ENCODE measurements at regions of chr9 and their contacts with region 1.

Region 1: GRCh38 chr9:79280691-79281090 is 291.1 kb upstream of the TLE4 start:
- DNase-seq: no peak
- ATAC-seq: no peak
- H3K4me3 Mint-ChIP-seq: no peak overlapping the region
- H3K27ac Mint-ChIP-seq: no peak overlapping the region
- H3K4me1 Mint-ChIP-seq: no peaks in the 10 kb centered on the region
- H3K27me3 Mint-ChIP-seq: peaks cover 8% of the 10 kb centered on the region
- CTCF ChIP-seq: no peak

Region 2: GRCh38 chr9:79264511-79265355 is 16.0 kb before region 1 on chr9:
- CTCF ChIA-PET with region 1: no interaction called
- POLR2A ChIA-PET with region 1: no interaction called
- intact Hi-C with region 1: no loop called
- DNase-seq: no peak
- ATAC-seq: no peak
- H3K4me3 Mint-ChIP-seq: no peak overlapping the region
- H3K27ac Mint-ChIP-seq: no peak overlapping the region
- H3K4me1 Mint-ChIP-seq: no peaks in the 10 kb centered on the region
- H3K27me3 Mint-ChIP-seq: peaks cover 30% of the 10 kb centered on the region
- CTCF ChIP-seq: no peak

Region 3: GRCh38 chr9:81132318-81132717 is 1851.6 kb after region 1 on chr9:
- CTCF ChIA-PET with region 1: no interaction called
- POLR2A ChIA-PET with region 1: interaction called, 12 read pairs
- intact Hi-C with region 1: no loop called
- DNase-seq: no peak
- ATAC-seq: no peak
- H3K4me3 Mint-ChIP-seq: no peak overlapping the region
- H3K27ac Mint-ChIP-seq: no peak overlapping the region
- H3K4me1 Mint-ChIP-seq: no peaks in the 10 kb centered on the region
- H3K27me3 Mint-ChIP-seq: no peaks in the 10 kb centered on the region
- CTCF ChIP-seq: no peak